Activated CD4-positive, alpha-beta T cell treated with anti-CD3 and anti-CD28 coated beads for 36 hours (primary cell): ENCODE measurements at regions of chr17 and their contacts with region 1.

Region 1: GRCh38 chr17:60720763-60721531 is 43.3 kb downstream of the BCAS3 start:
- DNase-seq: peak; percentile 56
- ATAC-seq: no peak
- H3K4me3 Mint-ChIP-seq: no peak overlapping the region
- H3K27ac Mint-ChIP-seq: no peak overlapping the region
- H3K4me1 Mint-ChIP-seq: peaks cover 3% of the 10 kb centered on the region
- H3K27me3 Mint-ChIP-seq: no peaks in the 10 kb centered on the region

Region 2: GRCh38 chr17:60680754-60681153 is 40.2 kb before region 1 on chr17:
- CTCF ChIA-PET with region 1: no interaction called
- POLR2A ChIA-PET with region 1: no interaction called
- intact Hi-C with region 1: no loop called
- DNase-seq: no peak
- ATAC-seq: no peak
- H3K4me3 Mint-ChIP-seq: no peak overlapping the region
- H3K27ac Mint-ChIP-seq: no peak overlapping the region
- H3K4me1 Mint-ChIP-seq: peaks cover 16% of the 10 kb centered on the region
- H3K27me3 Mint-ChIP-seq: no peaks in the 10 kb centered on the region

Region 3: GRCh38 chr17:60745544-60745943 is 24.6 kb after region 1 on chr17:
- CTCF ChIA-PET with region 1: interaction called, 14 read pairs
- POLR2A ChIA-PET with region 1: no interaction called
- intact Hi-C with region 1: no loop called
- DNase-seq: no peak
- ATAC-seq: no peak
- H3K4me3 Mint-ChIP-seq: no peak overlapping the region
- H3K27ac Mint-ChIP-seq: no peak overlapping the region
- H3K4me1 Mint-ChIP-seq: no peaks in the 10 kb centered on the region
- H3K27me3 Mint-ChIP-seq: no peaks in the 10 kb centered on the region

Region 4: DNA sequence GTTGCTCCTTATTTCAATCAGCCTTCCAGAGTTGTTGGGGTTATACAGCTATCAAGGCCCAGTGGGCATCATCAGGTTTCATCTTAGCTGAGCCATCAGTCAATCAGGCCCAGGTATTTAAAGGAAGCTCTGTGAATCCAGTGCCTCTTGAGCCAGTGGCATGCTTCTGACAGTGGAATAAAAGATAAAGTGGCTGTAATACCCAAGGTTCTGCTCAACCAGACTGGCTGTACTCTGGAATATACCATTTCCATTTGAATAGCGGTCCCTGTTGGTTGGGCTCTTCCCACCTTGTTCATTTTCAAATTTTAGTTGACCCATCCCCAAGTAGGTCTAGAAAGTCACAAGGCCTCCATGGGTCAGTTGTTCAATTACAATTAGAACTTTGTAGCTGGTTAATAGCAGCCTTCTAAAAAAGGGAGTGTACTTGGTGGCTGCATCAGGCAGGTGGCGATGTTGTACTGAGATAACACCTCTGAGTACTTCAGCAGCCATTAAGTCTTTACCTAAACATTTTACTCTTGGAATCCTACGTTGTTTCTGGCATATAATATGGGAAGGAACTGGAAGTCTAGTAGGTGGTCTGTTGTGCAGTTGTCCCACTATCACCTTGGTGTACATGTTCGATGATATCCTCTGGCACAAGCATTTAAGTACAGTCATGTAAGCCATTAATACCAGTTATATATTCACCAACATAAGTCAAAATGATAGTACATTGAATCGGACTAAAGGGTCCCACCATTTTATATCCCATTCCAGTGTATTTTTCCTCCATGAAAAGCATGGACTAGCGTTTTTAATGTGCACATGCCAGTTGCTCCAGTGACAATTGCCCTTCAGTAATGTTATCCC is 250.8 kb after region 1 on chr17:
- CTCF ChIA-PET with region 1: interaction called, 14 read pairs
- POLR2A ChIA-PET with region 1: no interaction called
- intact Hi-C with region 1: loop called in 1 of 2 experiments (anchors 5 kb)
- DNase-seq: peak; percentile 62
- ATAC-seq: peak; percentile 51
- H3K4me3 Mint-ChIP-seq: no peak overlapping the region
- H3K27ac Mint-ChIP-seq: no peak overlapping the region
- H3K4me1 Mint-ChIP-seq: no peaks in the 10 kb centered on the region
- H3K27me3 Mint-ChIP-seq: no peaks in the 10 kb centered on the region

Region 5: DNA sequence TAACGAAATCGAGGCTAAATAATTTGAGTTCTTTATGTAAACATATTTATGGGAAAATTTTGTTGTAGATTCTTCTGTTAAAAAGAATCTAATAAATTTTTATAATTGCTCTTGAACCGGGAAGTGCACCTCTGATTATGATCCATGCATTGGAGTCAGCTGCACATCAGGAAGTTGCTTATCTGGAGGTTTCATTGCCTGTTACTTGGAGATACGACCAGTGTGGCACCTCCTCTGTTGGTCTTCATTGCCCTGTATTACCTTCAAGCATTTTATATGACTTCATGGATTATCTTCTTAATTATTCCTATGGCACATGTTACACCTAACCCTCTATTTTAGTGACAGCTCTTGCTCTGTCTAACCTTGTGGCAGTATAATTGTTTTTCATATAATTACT is 366.1 kb after region 1 on chr17:
- CTCF ChIA-PET with region 1: no interaction called
- POLR2A ChIA-PET with region 1: no interaction called
- intact Hi-C with region 1: no loop called
- DNase-seq: no peak
- ATAC-seq: no peak
- H3K4me3 Mint-ChIP-seq: no peak overlapping the region
- H3K27ac Mint-ChIP-seq: no peak overlapping the region
- H3K4me1 Mint-ChIP-seq: peaks cover 2% of the 10 kb centered on the region
- H3K27me3 Mint-ChIP-seq: no peaks in the 10 kb centered on the region

Region 6: DNA sequence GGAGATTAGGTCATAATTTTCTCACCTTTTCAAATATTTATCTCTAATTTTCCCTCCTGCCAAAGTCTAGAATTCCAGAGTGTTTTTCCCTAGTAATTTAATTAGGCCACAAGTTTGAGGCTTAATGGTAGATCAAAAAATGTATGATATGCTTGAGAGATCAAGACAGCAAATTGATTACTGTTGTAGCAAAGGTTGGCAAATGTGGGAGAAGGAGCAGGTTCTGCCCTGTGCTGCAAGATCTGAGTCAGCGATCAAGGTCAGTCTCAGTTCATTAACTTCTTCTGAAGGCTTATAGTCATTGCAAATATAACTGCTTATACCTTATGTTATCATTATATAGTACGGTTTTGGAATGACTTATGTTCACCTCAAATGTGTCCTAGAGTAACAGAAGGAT is 447.5 kb after region 1 on chr17:
- CTCF ChIA-PET with region 1: no interaction called
- POLR2A ChIA-PET with region 1: no interaction called
- intact Hi-C with region 1: loop called in 1 of 2 experiments (anchors 10 kb)
- DNase-seq: no peak
- ATAC-seq: no peak
- H3K4me3 Mint-ChIP-seq: no peak overlapping the region
- H3K27ac Mint-ChIP-seq: no peak overlapping the region
- H3K4me1 Mint-ChIP-seq: no peaks in the 10 kb centered on the region
- H3K27me3 Mint-ChIP-seq: no peaks in the 10 kb centered on the region

Region 7: DNA sequence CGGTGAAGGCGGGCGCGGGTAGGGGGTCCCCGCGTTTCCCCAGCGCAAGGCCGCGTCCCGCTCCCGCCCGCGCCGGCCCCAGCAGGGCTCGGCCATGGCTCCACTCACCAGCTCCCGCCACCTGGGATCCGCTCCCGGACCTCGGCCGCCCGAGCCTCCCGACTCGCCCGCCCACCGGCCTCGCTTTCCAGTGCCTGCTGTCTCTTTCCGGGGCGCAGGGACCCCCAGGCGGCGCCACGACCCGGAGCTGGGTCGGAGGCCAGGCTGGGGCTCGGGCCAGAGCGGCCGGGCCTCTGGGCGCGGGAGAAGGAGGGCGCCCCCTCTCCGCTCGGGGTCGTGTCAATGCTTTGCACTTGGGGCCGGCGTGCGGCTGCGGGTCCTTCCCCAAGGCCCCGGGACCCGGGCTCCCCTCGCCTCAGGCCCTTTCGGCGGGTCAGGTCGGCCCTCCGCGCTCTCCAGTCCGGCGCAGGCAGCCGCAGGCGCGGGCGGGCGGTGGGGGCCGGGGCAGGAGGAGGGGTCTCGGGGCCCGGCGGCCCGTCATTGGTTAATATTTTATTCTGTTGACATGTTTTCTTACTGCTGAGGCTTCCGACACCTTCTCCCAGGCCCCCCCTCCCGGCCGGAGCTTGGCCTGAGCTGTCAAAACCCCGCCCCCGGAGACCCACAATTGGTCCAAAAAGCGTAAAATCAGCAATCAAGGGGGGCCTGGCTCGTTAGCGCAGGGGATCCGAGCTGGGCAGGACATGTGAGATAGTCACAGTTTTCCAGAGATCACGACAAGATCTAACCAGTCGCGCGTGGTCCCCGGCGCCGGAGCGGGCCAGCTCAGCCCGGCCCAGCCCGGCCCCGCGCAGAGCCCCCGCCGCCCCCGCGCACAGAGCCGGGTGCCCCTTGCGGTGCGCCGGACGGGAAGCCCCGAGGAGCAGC is 678.4 kb after region 1 on chr17 and contains the start of gene TBX2:
- CTCF ChIA-PET with region 1: interaction called, 3 read pairs
- POLR2A ChIA-PET with region 1: no interaction called
- intact Hi-C with region 1: loop called in 1 of 2 experiments (anchors 5 kb)
- DNase-seq: peak; percentile 18
- ATAC-seq: no peak
- H3K4me3 Mint-ChIP-seq: peak within 1 kb of the TSS; percentile 47
- H3K27ac Mint-ChIP-seq: peak within 1 kb of the TSS; percentile 17
- H3K4me1 Mint-ChIP-seq: peaks cover 37% of the 10 kb centered on the region
- H3K27me3 Mint-ChIP-seq: peaks cover 57% of the 10 kb centered on the region
- total RNA-seq, gene TBX2: not detected